ENCODE measurements at regions of chr14 and their contacts with region 1.

Region 1: DNA sequence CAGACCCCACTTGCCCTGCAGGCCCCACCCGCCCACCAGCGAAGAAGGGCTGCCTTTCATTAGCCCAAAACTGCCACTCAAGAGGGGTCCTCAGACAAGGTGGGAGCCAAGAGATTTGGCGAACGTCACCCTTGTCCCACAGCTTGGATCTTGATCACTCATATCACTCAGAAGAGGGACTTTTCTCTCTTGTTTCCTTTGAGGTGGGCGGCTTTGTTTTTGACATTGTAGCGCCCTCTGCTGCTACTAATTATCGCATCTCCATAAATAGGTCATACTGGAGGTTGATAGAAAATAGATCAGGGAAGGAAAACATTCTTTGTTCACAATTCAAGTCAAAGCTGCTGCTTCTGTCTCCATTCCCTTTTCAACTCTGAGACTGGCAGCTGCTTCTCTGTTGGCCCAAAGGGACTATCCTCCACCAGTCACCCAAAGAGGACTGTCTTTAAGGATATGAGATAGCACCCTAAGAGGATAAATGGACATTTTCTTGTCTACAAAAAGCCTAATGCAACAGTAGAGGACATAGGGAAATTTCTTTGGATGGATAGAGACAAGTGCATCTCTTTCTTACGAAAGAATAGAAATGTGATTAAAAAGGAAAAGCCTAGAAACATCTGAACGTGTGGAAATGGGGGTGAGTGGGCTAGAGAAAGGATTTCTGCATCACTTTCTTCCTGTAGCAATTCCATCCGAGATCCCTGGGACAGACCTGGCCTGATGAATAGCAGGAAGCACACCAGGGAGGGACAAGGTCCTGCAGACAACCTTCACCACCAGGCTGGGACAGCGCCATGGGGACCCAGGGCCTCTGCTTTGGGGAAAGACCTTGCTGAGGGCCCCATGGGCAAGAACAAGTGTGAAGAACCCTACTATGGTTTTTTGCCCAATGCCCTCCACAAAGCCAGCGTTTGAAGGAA is 115.8 kb downstream of the DAD1 start:
- DNase-seq: peak in 1 of 5 donors; percentile 28
- ATAC-seq: peak in 3 of 4 donors; percentile 39 to 55 (median 48)
- H3K4me3 ChIP-seq: no peak overlapping the region
- H3K27ac ChIP-seq: no peak overlapping the region
- H3K4me1 ChIP-seq: peaks cover 0 to 67% (median 21%) of the 10 kb centered on the region in 12 donors
- H3K27me3 ChIP-seq: peaks cover 0 to 9% (median 0%) of the 10 kb centered on the region in 9 donors
- CTCF ChIP-seq: peak; percentile 28 to 65 (median 52)
- POLR2A ChIP-seq: no peak

Region 2: DNA sequence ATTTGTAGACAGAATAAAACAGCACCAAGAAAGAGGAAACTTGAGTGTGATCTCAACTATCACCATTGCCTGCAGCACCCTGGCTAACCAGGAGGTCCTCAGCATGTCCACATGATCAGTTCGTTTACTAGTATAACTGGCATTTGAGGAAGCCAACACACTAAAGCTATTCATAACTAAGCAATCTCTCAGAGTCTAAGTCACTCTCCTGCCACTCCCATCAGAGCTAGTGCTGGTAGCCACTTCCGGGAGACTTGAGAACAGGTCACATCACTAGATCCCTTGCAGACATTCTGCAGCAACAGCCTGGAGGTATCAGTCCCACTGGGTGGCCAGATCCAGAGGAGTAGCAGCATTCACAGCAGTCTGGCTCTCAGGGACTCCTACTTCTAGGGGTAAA is 446.7 kb before region 1 on chr14:
- intact Hi-C with region 1: no loop called
- DNase-seq: no peak
- ATAC-seq: no peak
- H3K4me3 ChIP-seq: no peak overlapping the region
- H3K27ac ChIP-seq: no peak overlapping the region
- H3K4me1 ChIP-seq: no peaks in the 10 kb centered on the region
- H3K27me3 ChIP-seq: peaks cover 0 to 11% (median 0%) of the 10 kb centered on the region in 9 donors
- CTCF ChIP-seq: no peak
- POLR2A ChIP-seq: no peak

Region 3: DNA sequence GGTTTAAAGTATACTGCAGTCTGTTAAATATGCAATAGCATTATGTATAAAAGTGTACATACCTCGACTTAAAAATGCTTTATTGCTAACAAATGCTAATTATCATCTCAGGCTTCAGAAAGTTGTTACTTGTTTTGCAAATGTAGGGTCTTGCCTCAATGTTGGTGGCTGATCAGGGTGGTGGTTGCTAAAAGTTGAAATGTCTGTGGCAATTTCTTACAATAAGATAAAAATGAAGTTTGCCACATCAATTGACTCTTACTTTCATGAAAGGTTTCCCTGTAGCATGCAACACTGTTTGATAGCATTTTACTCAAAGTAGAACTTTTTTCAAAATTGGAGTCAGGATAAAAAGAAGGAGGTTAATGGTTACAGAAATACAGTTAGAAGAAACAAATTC is 391.9 kb before region 1 on chr14:
- intact Hi-C with region 1: no loop called
- DNase-seq: no peak
- ATAC-seq: no peak
- H3K4me3 ChIP-seq: no peak overlapping the region
- H3K27ac ChIP-seq: no peak overlapping the region
- H3K4me1 ChIP-seq: no peaks in the 10 kb centered on the region
- H3K27me3 ChIP-seq: no peaks in the 10 kb centered on the region
- CTCF ChIP-seq: no peak
- POLR2A ChIP-seq: no peak

Region 4: GRCh38 chr14:22319526-22320361 is 153.5 kb before region 1 on chr14:
- intact Hi-C with region 1: loop called in 1 of 10 experiments (anchors 5 kb)
- DNase-seq: peak in 4 of 5 donors; percentile 18 to 56 (median 38)
- ATAC-seq: peak in 3 of 4 donors; percentile 49 to 75 (median 58)
- H3K4me3 ChIP-seq: no peak overlapping the region
- H3K27ac ChIP-seq: no peak overlapping the region
- H3K4me1 ChIP-seq: no peaks in the 10 kb centered on the region
- H3K27me3 ChIP-seq: peaks cover 0 to 5% (median 0%) of the 10 kb centered on the region in 9 donors
- CTCF ChIP-seq: peak; percentile 56 to 81 (median 66)
- POLR2A ChIP-seq: no peak

Region 5: GRCh38 chr14:22397221-22397737 is 75.9 kb before region 1 on chr14:
- intact Hi-C with region 1: loop called in 4 of 10 experiments (anchors 2 to 5 kb)
- DNase-seq: no peak
- ATAC-seq: no peak
- H3K4me3 ChIP-seq: no peak overlapping the region
- H3K27ac ChIP-seq: no peak overlapping the region
- H3K4me1 ChIP-seq: peaks cover 0 to 14% (median 3%) of the 10 kb centered on the region in 12 donors
- H3K27me3 ChIP-seq: peaks cover 0 to 3% (median 0%) of the 10 kb centered on the region in 9 donors
- CTCF ChIP-seq: no peak
- POLR2A ChIP-seq: no peak

Region 6: GRCh38 chr14:22510527-22511110 is 37.4 kb after region 1 on chr14:
- intact Hi-C with region 1: loop called in 2 of 10 experiments (anchors 5 kb)
- DNase-seq: no peak
- ATAC-seq: no peak
- H3K4me3 ChIP-seq: peak overlapping the region in 1 of 12 donors; percentile 28
- H3K27ac ChIP-seq: peak overlapping the region in 2 of 12 donors; percentile 44 to 47
- H3K4me1 ChIP-seq: peaks cover 0 to 61% (median 33%) of the 10 kb centered on the region in 12 donors
- H3K27me3 ChIP-seq: no peaks in the 10 kb centered on the region
- CTCF ChIP-seq: no peak
- POLR2A ChIP-seq: no peak

Region 7: DNA sequence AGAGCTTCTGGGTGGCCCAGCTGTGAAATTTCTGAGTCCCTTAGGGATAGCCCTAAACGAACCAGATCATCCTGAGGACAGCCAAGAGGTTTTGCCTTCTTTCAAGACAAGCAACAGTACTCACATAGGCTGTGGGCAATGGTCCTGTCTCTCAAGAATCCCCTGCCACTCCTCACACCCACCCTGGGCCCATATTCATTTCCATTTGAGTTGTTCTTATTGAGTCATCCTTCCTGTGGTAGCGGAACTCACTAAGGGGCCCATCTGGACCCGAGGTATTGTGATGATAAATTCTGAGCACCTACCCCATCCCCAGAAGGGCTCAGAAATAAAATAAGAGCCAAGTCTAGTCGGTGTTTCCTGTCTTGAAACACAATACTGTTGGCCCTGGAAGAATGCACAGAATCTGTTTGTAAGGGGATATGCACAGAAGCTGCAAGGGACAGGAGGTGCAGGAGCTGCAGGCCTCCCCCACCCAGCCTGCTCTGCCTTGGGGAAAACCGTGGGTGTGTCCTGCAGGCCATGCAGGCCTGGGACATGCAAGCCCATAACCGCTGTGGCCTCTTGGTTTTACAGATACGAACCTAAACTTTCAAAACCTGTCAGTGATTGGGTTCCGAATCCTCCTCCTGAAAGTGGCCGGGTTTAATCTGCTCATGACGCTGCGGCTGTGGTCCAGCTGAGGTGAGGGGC is 76.9 kb after region 1 on chr14:
- intact Hi-C with region 1: loop called in 2 of 10 experiments (anchors 5 to 10 kb)
- DNase-seq: no peak
- ATAC-seq: peak in 2 of 4 donors; percentile 17 to 24
- H3K4me3 ChIP-seq: peak overlapping the region in 1 of 12 donors; percentile 32
- H3K27ac ChIP-seq: peak overlapping the region in 5 of 12 donors; percentile 13 to 89 (median 45)
- H3K4me1 ChIP-seq: peaks cover 0 to 69% (median 24%) of the 10 kb centered on the region in 12 donors
- H3K27me3 ChIP-seq: no peaks in the 10 kb centered on the region
- CTCF ChIP-seq: no peak
- POLR2A ChIP-seq: no peak

Measured in heart left ventricle (tissue), 16 donors.